T-cell (primary cell): ENCODE measurements at regions of chr3 and their contacts with region 1.

Region 1: GRCh38 chr3:69092030-69092516 is 7.3 kb downstream of the ARL6IP5 start:
- DNase-seq: peak in 13 of 35 experiments; percentile 13 to 66 (median 24)
- ATAC-seq: peak; percentile 74 to 81 (median 77)
- H3K4me3 ChIP-seq: peak overlapping the region; percentile 35 to 71
- H3K4me3 Mint-ChIP-seq: peak overlapping the region; percentile 64 to 77 (median 68)
- H3K27ac ChIP-seq: peak overlapping the region; percentile 90
- H3K27ac Mint-ChIP-seq: peak overlapping the region; percentile 97 to 98
- H3K4me1 ChIP-seq: peaks cover 87 to 90% of the 10 kb centered on the region in 2 experiments
- H3K4me1 Mint-ChIP-seq: peaks cover 91 to 95% (median 92%) of the 10 kb centered on the region in 3 donors
- H3K27me3 ChIP-seq: no peaks in the 10 kb centered on the region
- H3K27me3 Mint-ChIP-seq: no peaks in the 10 kb centered on the region

Region 2: DNA sequence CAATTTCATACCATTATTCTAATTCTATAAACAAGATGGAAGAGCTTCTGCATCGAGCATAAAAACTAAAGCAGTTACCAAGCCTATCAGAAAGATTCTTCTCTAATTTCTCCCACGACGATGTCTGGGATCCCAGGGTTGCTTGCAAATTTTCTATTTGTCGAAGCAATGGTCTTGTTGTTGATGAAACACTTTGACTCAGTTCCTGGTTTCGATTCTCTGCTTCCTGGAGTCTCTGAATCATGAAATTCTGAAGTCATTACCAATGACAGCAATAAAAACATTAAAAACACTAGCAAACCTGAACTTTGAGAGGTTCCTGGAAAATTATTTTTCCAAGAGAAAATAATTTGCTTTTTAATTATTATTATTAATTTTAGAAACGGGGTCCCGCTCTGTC is 58.6 kb before region 1 on chr3:
- CTCF ChIA-PET with region 1: no interaction called
- POLR2A ChIA-PET with region 1: interaction called, 3 to 11 read pairs
- DNase-seq: no peak
- ATAC-seq: no peak
- H3K4me3 ChIP-seq: no peak overlapping the region
- H3K4me3 Mint-ChIP-seq: no peak overlapping the region
- H3K27ac ChIP-seq: no peak overlapping the region
- H3K27ac Mint-ChIP-seq: no peak overlapping the region
- H3K4me1 ChIP-seq: no peaks in the 10 kb centered on the region
- H3K4me1 Mint-ChIP-seq: peaks cover 4 to 9% (median 6%) of the 10 kb centered on the region in 3 donors
- H3K27me3 ChIP-seq: no peaks in the 10 kb centered on the region
- H3K27me3 Mint-ChIP-seq: no peaks in the 10 kb centered on the region

Region 3: DNA sequence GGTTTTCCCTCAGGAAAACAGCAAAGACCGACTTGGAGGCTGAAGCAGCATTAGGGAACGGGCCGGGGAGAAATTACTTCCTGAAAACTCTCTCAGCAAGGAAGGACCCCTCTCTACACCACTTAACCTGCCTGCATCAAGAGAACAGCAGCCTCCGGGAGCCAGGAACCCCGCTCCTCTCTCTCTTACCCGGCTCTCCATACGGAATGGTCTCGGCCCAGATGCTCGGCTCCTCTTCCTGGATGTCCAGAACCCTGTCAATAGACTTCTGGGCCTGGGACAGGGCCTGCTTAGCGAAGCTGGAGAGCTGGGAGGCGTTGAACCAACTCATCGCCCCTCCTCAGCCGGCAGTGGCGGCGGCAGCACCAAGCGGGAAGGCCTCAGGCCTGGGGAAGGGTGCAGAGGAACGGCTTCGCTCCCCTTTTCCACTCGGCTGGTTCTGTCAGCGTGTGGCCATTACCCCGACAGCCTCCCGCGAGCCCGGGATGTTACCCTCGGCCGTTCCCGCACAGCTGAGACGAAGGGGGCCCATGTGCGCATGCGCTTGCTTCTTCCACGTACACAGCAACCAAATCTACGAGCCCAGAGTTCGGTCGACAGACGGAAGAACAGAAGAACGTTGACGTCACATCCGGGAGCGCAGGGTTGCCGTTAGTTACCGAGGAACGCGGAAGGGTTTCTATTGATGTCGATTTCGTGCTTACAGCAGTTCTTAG is 40.2 kb before region 1 on chr3 and contains the start of gene TMF1:
- CTCF ChIA-PET with region 1: interaction called, 3 to 12 read pairs
- POLR2A ChIA-PET with region 1: interaction called, 4 to 5 read pairs
- DNase-seq: peak; percentile 92 to 100 (median 97)
- ATAC-seq: peak; percentile 91 to 93 (median 92)
- H3K4me3 ChIP-seq: peak within 1 kb of the TSS; percentile 73 to 91
- H3K4me3 Mint-ChIP-seq: peak within 1 kb of the TSS; percentile 98 to 99 (median 99)
- H3K27ac ChIP-seq: peak within 1 kb of the TSS; percentile 87
- H3K27ac Mint-ChIP-seq: peak within 1 kb of the TSS; percentile 97
- H3K4me1 ChIP-seq: peaks cover 20 to 22% of the 10 kb centered on the region in 2 experiments
- H3K4me1 Mint-ChIP-seq: peaks cover 47 to 53% (median 50%) of the 10 kb centered on the region in 3 donors
- H3K27me3 ChIP-seq: no peaks in the 10 kb centered on the region
- H3K27me3 Mint-ChIP-seq: no peaks in the 10 kb centered on the region
- total RNA-seq, gene TMF1: 39.9 to 80.4 (median 46.1) TPM

Region 4: DNA sequence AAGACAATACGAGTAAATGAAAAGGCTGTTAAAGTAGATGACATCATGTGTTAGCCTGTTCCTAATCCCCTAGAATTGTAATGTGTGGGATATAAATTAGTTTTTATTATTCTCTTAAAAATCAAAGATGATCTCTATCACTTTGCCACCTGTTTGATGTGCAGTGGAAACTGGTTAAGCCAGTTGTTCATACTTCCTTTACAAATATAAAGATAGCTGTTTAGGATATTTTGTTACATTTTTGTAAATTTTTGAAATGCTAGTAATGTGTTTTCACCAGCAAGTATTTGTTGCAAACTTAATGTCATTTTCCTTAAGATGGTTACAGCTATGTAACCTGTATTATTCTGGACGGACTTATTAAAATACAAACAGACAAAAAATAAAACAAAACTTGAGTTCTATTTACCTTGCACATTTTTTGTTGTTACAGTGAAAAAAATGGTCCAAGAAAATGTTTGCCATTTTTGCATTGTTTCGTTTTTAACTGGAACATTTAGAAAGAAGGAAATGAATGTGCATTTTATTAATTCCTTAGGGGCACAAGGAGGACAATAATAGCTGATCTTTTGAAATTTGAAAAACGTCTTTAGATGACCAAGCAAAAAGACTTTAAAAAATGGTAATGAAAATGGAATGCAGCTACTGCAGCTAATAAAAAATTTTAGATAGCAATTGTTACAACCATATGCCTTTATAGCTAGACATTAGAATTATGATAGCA is 13.1 kb after region 1 on chr3:
- CTCF ChIA-PET with region 1: interaction called, 4 read pairs
- POLR2A ChIA-PET with region 1: interaction called in 1 of 2 experiments, 15 read pairs
- DNase-seq: no peak
- ATAC-seq: no peak
- H3K4me3 ChIP-seq: no peak overlapping the region
- H3K4me3 Mint-ChIP-seq: no peak overlapping the region
- H3K27ac ChIP-seq: no peak overlapping the region
- H3K27ac Mint-ChIP-seq: peak overlapping the region in 1 of 2 donors; percentile 36
- H3K4me1 ChIP-seq: peaks cover 4 to 8% of the 10 kb centered on the region in 2 experiments
- H3K4me1 Mint-ChIP-seq: peaks cover 45 to 51% (median 48%) of the 10 kb centered on the region in 3 donors
- H3K27me3 ChIP-seq: no peaks in the 10 kb centered on the region
- H3K27me3 Mint-ChIP-seq: no peaks in the 10 kb centered on the region

Region 5: GRCh38 chr3:69120879-69121464 is 28.9 kb after region 1 on chr3:
- CTCF ChIA-PET with region 1: interaction called in 1 of 2 experiments, 20 read pairs
- POLR2A ChIA-PET with region 1: no interaction called
- DNase-seq: peak; percentile 43 to 91 (median 70)
- ATAC-seq: peak; percentile 70 to 92 (median 86)
- H3K4me3 ChIP-seq: no peak overlapping the region
- H3K4me3 Mint-ChIP-seq: no peak overlapping the region
- H3K27ac ChIP-seq: no peak overlapping the region
- H3K27ac Mint-ChIP-seq: peak overlapping the region in 1 of 2 donors; percentile 6
- H3K4me1 ChIP-seq: no peaks in the 10 kb centered on the region
- H3K4me1 Mint-ChIP-seq: peaks cover 0 to 5% (median 5%) of the 10 kb centered on the region in 3 donors
- H3K27me3 ChIP-seq: peaks cover 0 to 4% of the 10 kb centered on the region in 2 experiments
- H3K27me3 Mint-ChIP-seq: peaks cover 0 to 1% of the 10 kb centered on the region in 2 donors

Region 6: DNA sequence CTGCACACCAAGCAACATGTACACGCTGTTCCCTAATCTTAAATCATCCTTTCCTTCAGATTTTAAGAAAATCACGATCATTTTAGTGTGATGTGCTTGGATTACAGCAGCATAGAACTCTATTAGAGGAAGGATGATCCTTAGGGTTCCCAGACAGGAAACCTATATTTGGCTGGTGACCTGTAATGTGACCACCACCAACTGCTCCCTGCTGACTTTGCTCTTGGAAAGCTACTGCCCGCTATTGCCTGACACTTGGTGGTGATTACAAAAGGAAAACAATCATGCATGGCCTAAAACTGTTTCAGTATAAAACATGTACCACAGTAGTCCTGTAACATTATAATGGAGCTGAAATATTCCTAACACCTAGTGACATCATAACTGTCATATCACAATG is 57.5 kb after region 1 on chr3:
- CTCF ChIA-PET with region 1: no interaction called
- POLR2A ChIA-PET with region 1: no interaction called
- DNase-seq: no peak
- ATAC-seq: no peak
- H3K4me3 ChIP-seq: no peak overlapping the region
- H3K4me3 Mint-ChIP-seq: no peak overlapping the region
- H3K27ac ChIP-seq: no peak overlapping the region
- H3K27ac Mint-ChIP-seq: no peak overlapping the region
- H3K4me1 ChIP-seq: no peaks in the 10 kb centered on the region
- H3K4me1 Mint-ChIP-seq: no peaks in the 10 kb centered on the region
- H3K27me3 ChIP-seq: no peaks in the 10 kb centered on the region
- H3K27me3 Mint-ChIP-seq: no peaks in the 10 kb centered on the region

Region 7: GRCh38 chr3:70789898-70790297 is 1697.8 kb after region 1 on chr3:
- CTCF ChIA-PET with region 1: no interaction called
- POLR2A ChIA-PET with region 1: interaction called in 1 of 2 experiments, 11 read pairs
- DNase-seq: no peak
- ATAC-seq: no peak
- H3K4me3 ChIP-seq: no peak overlapping the region
- H3K4me3 Mint-ChIP-seq: no peak overlapping the region
- H3K27ac ChIP-seq: no peak overlapping the region
- H3K27ac Mint-ChIP-seq: no peak overlapping the region
- H3K4me1 ChIP-seq: no peaks in the 10 kb centered on the region
- H3K4me1 Mint-ChIP-seq: no peaks in the 10 kb centered on the region
- H3K27me3 ChIP-seq: no peaks in the 10 kb centered on the region
- H3K27me3 Mint-ChIP-seq: peaks cover 3 to 9% of the 10 kb centered on the region in 2 donors